ENCODE measurements at regions of chr2 and their contacts with region 1.

Region 1: GRCh38 chr2:96760036-96760985 is at the start of gene CNNM4:
- DNase-seq: peak; percentile 78 to 93 (median 88)
- ATAC-seq: peak; percentile 94 to 97 (median 95)
- H3K4me3 ChIP-seq: peak within 1 kb of the TSS; percentile 77 to 80
- H3K4me3 Mint-ChIP-seq: peak within 1 kb of the TSS; percentile 83 to 86 (median 83)
- H3K27ac ChIP-seq: peak within 1 kb of the TSS; percentile 74
- H3K27ac Mint-ChIP-seq: peak within 1 kb of the TSS; percentile 89 to 94
- H3K4me1 ChIP-seq: peaks cover 27 to 57% of the 10 kb centered on the region in 2 experiments
- H3K4me1 Mint-ChIP-seq: peaks cover 48 to 54% (median 50%) of the 10 kb centered on the region in 3 donors
- H3K27me3 ChIP-seq: no peaks in the 10 kb centered on the region
- H3K27me3 Mint-ChIP-seq: no peaks in the 10 kb centered on the region
- total RNA-seq, gene CNNM4: 5.3 to 9.4 (median 6.4) TPM

Region 2: GRCh38 chr2:96452053-96452452 is 308.3 kb before region 1 on chr2:
- CTCF ChIA-PET with region 1: no interaction called
- POLR2A ChIA-PET with region 1: no interaction called
- DNase-seq: no peak
- ATAC-seq: no peak
- H3K4me3 ChIP-seq: no peak overlapping the region
- H3K4me3 Mint-ChIP-seq: no peak overlapping the region
- H3K27ac ChIP-seq: no peak overlapping the region
- H3K27ac Mint-ChIP-seq: no peak overlapping the region
- H3K4me1 ChIP-seq: no peaks in the 10 kb centered on the region
- H3K4me1 Mint-ChIP-seq: no peaks in the 10 kb centered on the region
- H3K27me3 ChIP-seq: peaks cover 0 to 16% of the 10 kb centered on the region in 2 experiments
- H3K27me3 Mint-ChIP-seq: peaks cover 0 to 3% of the 10 kb centered on the region in 2 donors

Region 3: GRCh38 chr2:96726131-96726530 is 34.2 kb before region 1 on chr2:
- CTCF ChIA-PET with region 1: no interaction called
- POLR2A ChIA-PET with region 1: no interaction called
- DNase-seq: no peak
- ATAC-seq: no peak
- H3K4me3 ChIP-seq: no peak overlapping the region
- H3K4me3 Mint-ChIP-seq: no peak overlapping the region
- H3K27ac ChIP-seq: no peak overlapping the region
- H3K27ac Mint-ChIP-seq: no peak overlapping the region
- H3K4me1 ChIP-seq: no peaks in the 10 kb centered on the region
- H3K4me1 Mint-ChIP-seq: no peaks in the 10 kb centered on the region
- H3K27me3 ChIP-seq: no peaks in the 10 kb centered on the region
- H3K27me3 Mint-ChIP-seq: no peaks in the 10 kb centered on the region

Region 4: GRCh38 chr2:96773922-96774321 is 13.6 kb after region 1 on chr2:
- CTCF ChIA-PET with region 1: interaction called, 7 to 30 read pairs
- POLR2A ChIA-PET with region 1: interaction called in 1 of 2 experiments, 3 read pairs
- DNase-seq: peak in 34 of 35 experiments; percentile 23 to 72 (median 39)
- ATAC-seq: peak; percentile 74 to 88 (median 82)
- H3K4me3 ChIP-seq: peak overlapping the region; percentile 60 to 72
- H3K4me3 Mint-ChIP-seq: peak overlapping the region; percentile 81 to 86 (median 84)
- H3K27ac ChIP-seq: peak overlapping the region; percentile 82
- H3K27ac Mint-ChIP-seq: peak overlapping the region; percentile 94 to 96
- H3K4me1 ChIP-seq: peaks cover 0 to 22% of the 10 kb centered on the region in 2 experiments
- H3K4me1 Mint-ChIP-seq: peaks cover 19 to 33% (median 29%) of the 10 kb centered on the region in 3 donors
- H3K27me3 ChIP-seq: no peaks in the 10 kb centered on the region
- H3K27me3 Mint-ChIP-seq: no peaks in the 10 kb centered on the region

Region 5: DNA sequence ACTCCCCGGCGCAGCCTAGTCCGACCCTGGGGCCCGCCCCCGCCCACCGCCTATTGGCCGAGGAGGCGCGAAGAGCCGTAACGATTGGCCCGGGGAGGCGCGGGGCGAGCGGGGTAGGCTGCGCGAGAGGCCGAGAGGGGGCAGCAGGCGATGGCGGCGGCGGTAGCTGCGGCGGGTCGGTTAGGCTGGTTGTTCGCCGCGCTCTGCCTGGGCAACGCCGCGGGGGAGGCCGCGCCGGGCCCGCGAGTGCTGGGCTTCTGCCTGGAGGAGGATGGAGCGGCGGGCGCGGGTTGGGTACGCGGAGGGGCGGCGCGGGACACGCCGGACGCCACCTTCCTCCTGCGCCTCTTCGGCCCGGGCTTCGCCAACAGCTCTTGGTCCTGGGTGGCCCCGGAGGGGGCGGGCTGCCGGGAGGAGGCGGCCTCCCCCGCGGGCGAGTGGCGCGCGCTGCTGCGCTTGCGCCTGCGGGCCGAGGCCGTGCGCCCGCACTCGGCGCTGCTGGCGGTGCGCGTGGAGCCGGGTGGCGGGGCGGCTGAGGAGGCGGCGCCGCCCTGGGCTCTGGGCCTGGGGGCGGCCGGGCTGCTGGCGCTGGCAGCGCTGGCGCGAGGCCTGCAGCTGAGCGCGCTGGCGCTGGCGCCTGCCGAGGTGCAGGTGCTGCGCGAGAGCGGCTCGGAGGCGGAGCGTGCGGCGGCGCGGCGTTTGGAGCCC is 56.0 kb after region 1 on chr2 and contains the start of gene CNNM3:
- CTCF ChIA-PET with region 1: interaction called, 3 read pairs
- POLR2A ChIA-PET with region 1: interaction called in 1 of 2 experiments, 10 read pairs
- DNase-seq: peak; percentile 83 to 98 (median 92)
- ATAC-seq: peak; percentile 89 to 94 (median 92)
- H3K4me3 ChIP-seq: peak within 1 kb of the TSS; percentile 70 to 86
- H3K4me3 Mint-ChIP-seq: peak within 1 kb of the TSS; percentile 85 to 94 (median 86)
- H3K27ac ChIP-seq: peak within 1 kb of the TSS; percentile 54
- H3K27ac Mint-ChIP-seq: peak within 1 kb of the TSS; percentile 93 to 95
- H3K4me1 ChIP-seq: peaks cover 23 to 48% of the 10 kb centered on the region in 2 experiments
- H3K4me1 Mint-ChIP-seq: peaks cover 58 to 65% (median 64%) of the 10 kb centered on the region in 3 donors
- H3K27me3 ChIP-seq: no peaks in the 10 kb centered on the region
- H3K27me3 Mint-ChIP-seq: no peaks in the 10 kb centered on the region
- total RNA-seq, gene CNNM3: 44.2 to 55.3 (median 48.0) TPM

Region 6: GRCh38 chr2:98455494-98455976 is 1695.2 kb after region 1 on chr2:
- CTCF ChIA-PET with region 1: no interaction called
- POLR2A ChIA-PET with region 1: no interaction called
- DNase-seq: peak in 17 of 35 experiments; percentile 27 to 72 (median 39)
- ATAC-seq: peak; percentile 20 to 72 (median 24)
- H3K4me3 ChIP-seq: no peak overlapping the region
- H3K4me3 Mint-ChIP-seq: peak overlapping the region; percentile 65 to 93 (median 68)
- H3K27ac ChIP-seq: peak overlapping the region; percentile 93
- H3K27ac Mint-ChIP-seq: peak overlapping the region; percentile 91
- H3K4me1 ChIP-seq: peaks cover 84 to 98% of the 10 kb centered on the region in 2 experiments
- H3K4me1 Mint-ChIP-seq: peaks cover 95 to 96% (median 96%) of the 10 kb centered on the region in 3 donors
- H3K27me3 ChIP-seq: no peaks in the 10 kb centered on the region
- H3K27me3 Mint-ChIP-seq: no peaks in the 10 kb centered on the region

Region 7: DNA sequence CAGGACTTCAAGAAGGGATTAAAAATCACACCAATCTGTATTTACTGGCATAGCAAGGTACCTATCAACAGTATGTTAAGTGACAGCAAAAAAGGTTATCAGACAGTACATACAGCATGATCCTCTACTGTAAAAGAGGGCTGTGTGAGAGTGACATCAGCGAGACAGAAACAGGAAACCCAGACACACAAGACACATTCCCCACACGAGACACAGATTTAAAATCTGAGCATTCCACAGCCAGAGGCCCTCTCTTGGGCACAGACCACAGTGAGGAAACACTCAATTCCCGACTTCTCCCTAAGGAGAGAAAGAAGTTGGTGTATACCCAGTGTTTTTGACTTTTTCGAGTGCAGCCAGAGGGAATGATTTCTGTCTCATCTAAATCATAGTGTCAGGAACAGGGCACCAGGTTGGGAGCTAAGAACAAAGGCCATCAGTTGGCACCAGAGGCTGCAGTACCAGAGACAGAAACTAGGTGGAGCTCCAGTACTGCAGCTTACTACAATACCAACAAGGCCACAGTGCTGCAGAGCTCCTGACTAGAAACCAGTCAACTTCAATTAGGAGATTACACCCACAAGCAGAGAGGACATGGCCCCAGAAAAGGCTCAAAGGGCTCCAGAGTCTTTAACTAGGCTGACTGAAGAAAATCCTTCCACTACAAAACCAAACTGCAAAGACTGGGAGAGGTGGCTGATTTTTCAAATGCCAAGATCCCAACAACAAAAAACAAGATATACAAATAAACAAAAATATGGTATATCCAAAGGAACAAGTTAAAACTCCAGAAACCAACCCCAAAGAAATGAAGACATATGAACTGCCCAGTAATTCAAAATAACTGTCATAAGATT is 1889.1 kb after region 1 on chr2:
- CTCF ChIA-PET with region 1: no interaction called
- POLR2A ChIA-PET with region 1: no interaction called
- DNase-seq: peak; percentile 58 to 92 (median 77)
- ATAC-seq: peak; percentile 91 to 95 (median 93)
- H3K4me3 ChIP-seq: no peak overlapping the region
- H3K4me3 Mint-ChIP-seq: peak overlapping the region; percentile 1 to 39 (median 13)
- H3K27ac ChIP-seq: peak overlapping the region; percentile 31
- H3K27ac Mint-ChIP-seq: peak overlapping the region; percentile 88 to 92
- H3K4me1 ChIP-seq: peaks cover 25 to 28% of the 10 kb centered on the region in 2 experiments
- H3K4me1 Mint-ChIP-seq: peaks cover 55 to 71% (median 60%) of the 10 kb centered on the region in 3 donors
- H3K27me3 ChIP-seq: no peaks in the 10 kb centered on the region
- H3K27me3 Mint-ChIP-seq: no peaks in the 10 kb centered on the region